PC-3 (cell line): ENCODE measurements at regions of chr4 and their contacts with region 1.

Region 1: GRCh38 chr4:185134307-185134869 is 8.7 kb upstream of the SLC25A4 start:
- DNase-seq: peak; percentile 69
- ATAC-seq: peak; percentile 70
- H3K4me3 ChIP-seq: no peak overlapping the region
- H3K27ac ChIP-seq: no peak overlapping the region
- H3K4me1 ChIP-seq: no peaks in the 10 kb centered on the region
- H3K27me3 ChIP-seq: no peaks in the 10 kb centered on the region
- CTCF ChIP-seq: peak; percentile 84

Region 2: DNA sequence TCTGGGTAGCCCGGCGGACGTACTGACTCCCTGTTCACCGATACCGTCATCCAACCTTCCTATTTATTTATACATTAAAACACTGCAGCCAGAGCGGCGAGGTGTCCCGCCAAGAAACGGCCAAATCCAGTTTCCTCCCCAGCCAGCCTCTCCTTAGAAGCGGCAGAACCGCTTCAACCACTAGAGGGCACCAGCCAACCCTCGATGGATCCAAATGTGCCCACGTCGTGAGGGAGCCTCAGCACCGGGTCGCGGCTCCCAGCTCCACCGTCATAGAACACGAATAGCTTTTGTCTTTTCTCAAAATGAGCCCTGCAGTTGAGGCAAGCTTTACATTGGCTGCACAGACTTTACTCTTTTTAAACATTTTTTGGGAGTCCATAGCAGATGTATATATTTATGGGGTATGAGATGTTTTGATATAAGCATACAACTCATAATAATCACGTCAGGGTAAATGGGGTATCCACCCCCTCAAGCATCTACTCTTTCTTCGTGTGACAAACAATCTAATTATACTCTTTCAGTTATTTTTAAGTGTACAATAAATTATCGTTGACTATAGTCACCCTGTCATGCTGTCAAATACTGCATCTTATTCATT is 129.1 kb before region 1 on chr4:
- CTCF ChIA-PET with region 1: interaction called, 5 read pairs
- POLR2A ChIA-PET with region 1: interaction called, 3 read pairs
- intact Hi-C with region 1: loop called (anchors 1 kb)
- DNase-seq: peak; percentile 87
- ATAC-seq: peak; percentile 95
- H3K4me3 ChIP-seq: peak overlapping the region; percentile 62
- H3K27ac ChIP-seq: no peak overlapping the region
- H3K4me1 ChIP-seq: peaks cover 2% of the 10 kb centered on the region; the same call in 1 of the 2 replicates
- H3K27me3 ChIP-seq: peaks cover 22% of the 10 kb centered on the region
- CTCF ChIP-seq: peak; percentile 88

Region 3: GRCh38 chr4:185039508-185040273 is 94.7 kb before region 1 on chr4:
- CTCF ChIA-PET with region 1: interaction called, 15 read pairs
- POLR2A ChIA-PET with region 1: no interaction called
- intact Hi-C with region 1: loop called (anchors 1 kb)
- DNase-seq: peak; percentile 54
- ATAC-seq: peak; percentile 86
- H3K4me3 ChIP-seq: peak overlapping the region; percentile 51; the same call in 1 of the 2 replicates
- H3K27ac ChIP-seq: no peak overlapping the region
- H3K4me1 ChIP-seq: no peaks in the 10 kb centered on the region
- H3K27me3 ChIP-seq: peaks cover 17% of the 10 kb centered on the region
- CTCF ChIP-seq: peak; percentile 77

Region 4: GRCh38 chr4:185874516-185875230 is 740.3 kb after region 1 on chr4:
- CTCF ChIA-PET with region 1: no interaction called
- POLR2A ChIA-PET with region 1: no interaction called
- intact Hi-C with region 1: no loop called
- DNase-seq: peak; percentile 40
- ATAC-seq: peak; percentile 76
- H3K4me3 ChIP-seq: no peak overlapping the region
- H3K27ac ChIP-seq: peak overlapping the region; percentile 46
- H3K4me1 ChIP-seq: peaks cover 15% of the 10 kb centered on the region
- H3K27me3 ChIP-seq: no peaks in the 10 kb centered on the region
- CTCF ChIP-seq: no peak